Endothelial cell of umbilical vein (primary cell): ENCODE measurements at regions of chr2 and their contacts with region 1.

Region 1: GRCh38 chr2:64750817-64751285 is 97.1 kb upstream of the SERTAD2 start:
- DNase-seq: peak; percentile 100
- H3K4me3 ChIP-seq: peak overlapping the region; percentile 74 to 96 (median 87)
- H3K27ac ChIP-seq: peak overlapping the region; percentile 83
- H3K4me1 ChIP-seq: peaks cover 17% of the 10 kb centered on the region
- H3K27me3 ChIP-seq: no peaks in the 10 kb centered on the region
- CTCF ChIP-seq: no peak
- POLR2A ChIP-seq: peak; percentile 95

Region 2: DNA sequence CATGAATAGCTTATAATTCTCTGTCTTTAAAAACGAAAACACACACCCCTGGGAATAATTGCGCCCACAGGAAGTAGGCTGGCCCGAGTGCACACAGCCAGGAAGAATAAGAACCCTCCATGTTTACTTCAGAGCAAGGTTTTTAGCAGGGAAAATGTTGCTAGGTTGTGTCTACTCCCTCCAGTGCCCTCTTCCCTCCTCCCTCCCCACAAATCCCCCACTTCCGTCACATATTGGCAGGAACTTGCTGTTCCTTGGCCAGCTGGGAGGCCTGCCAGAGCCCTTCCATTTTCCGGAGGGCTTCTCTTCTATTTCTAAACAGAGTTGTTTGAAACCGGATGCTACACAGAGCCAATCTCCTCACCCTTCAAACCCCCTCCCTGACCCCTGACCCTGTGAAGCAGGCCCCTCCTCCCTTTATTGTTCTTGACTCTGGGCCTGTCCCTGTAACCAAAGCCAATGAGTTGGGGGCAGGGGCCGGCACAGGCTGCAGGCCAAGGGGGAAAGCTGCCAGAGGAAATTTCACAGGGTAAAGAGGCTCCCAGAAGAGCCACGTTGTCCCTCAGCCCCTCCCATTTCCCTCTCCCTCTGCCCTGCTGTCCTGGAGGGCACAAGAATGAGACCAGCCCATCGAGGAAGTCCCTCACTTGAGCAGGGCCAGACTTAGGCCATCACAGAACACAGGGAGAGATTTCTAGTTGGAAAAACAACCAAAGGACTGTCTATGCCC is 346.7 kb before region 1 on chr2:
- CTCF ChIA-PET with region 1: no interaction called
- POLR2A ChIA-PET with region 1: no interaction called
- dilution Hi-C with region 1: no loop called
- intact Hi-C with region 1: loop called (anchors 1 kb)
- DNase-seq: peak; percentile 99
- H3K4me3 ChIP-seq: peak overlapping the region in 1 of 3 experiments; percentile 26
- H3K27ac ChIP-seq: peak overlapping the region; percentile 72
- H3K4me1 ChIP-seq: peaks cover 35% of the 10 kb centered on the region
- H3K27me3 ChIP-seq: peaks cover 7 to 17% of the 10 kb centered on the region in 2 experiments
- CTCF ChIP-seq: no peak
- POLR2A ChIP-seq: no peak

Region 3: DNA sequence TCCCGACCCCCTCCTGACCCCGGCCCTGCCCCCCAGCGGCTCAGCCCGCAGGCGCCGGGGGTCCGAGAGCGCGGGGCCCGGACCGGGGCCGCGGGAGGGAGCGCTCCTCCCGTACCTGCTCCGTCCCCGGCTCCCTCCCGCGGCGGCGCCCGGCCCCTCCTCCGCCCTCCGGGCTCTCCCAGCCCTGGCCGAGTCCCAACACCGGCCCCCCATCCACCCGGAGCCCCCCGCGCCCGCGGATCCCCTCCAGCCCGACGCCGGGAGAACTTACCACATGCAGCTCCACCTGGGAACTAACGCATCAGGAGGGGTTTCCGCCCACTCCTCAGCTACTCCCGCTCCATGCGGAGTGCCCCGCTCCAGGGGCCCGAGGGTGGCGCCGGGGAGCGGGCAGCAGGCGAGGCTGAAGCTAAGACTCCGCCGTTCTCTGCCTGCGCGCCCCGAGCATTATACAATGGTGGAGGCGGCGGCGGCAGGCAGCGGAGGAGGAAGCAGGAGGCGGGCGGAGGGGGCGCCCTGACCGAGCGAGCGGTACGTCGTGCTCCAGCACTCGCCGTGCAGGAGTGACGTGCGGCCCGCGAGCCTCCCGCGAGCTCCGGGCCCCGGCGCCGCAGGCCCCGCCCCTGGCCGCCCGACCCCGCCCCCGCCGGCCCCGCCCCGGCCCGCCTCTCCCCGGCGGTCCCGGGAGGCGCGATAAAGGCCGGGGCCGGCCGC is 97.3 kb before region 1 on chr2 and contains the start of gene SERTAD2:
- CTCF ChIA-PET with region 1: interaction called, 86 read pairs
- POLR2A ChIA-PET with region 1: interaction called, 62 read pairs
- dilution Hi-C with region 1: no loop called
- intact Hi-C with region 1: loop called (anchors 1 kb)
- DNase-seq: peak; percentile 87
- H3K4me3 ChIP-seq: peak within 1 kb of the TSS; percentile 72 to 89 (median 83)
- H3K27ac ChIP-seq: peak within 1 kb of the TSS; percentile 91
- H3K4me1 ChIP-seq: peaks cover 21% of the 10 kb centered on the region
- H3K27me3 ChIP-seq: no peaks in the 10 kb centered on the region
- CTCF ChIP-seq: peak in 1 of 2 donors; percentile 14
- POLR2A ChIP-seq: peak; percentile 63
- total RNA-seq, gene SERTAD2: 11.2 and 12.0 TPM in 2 replicates

Region 4: GRCh38 chr2:64767670-64768468 is 17.0 kb after region 1 on chr2:
- CTCF ChIA-PET with region 1: interaction called, 26 read pairs
- POLR2A ChIA-PET with region 1: interaction called, 19 read pairs
- dilution Hi-C with region 1: no loop called
- intact Hi-C with region 1: loop called (anchors 1 kb)
- DNase-seq: peak; percentile 87
- H3K4me3 ChIP-seq: peak overlapping the region; percentile 57 to 80 (median 75)
- H3K27ac ChIP-seq: peak overlapping the region; percentile 87
- H3K4me1 ChIP-seq: peaks cover 12% of the 10 kb centered on the region
- H3K27me3 ChIP-seq: no peaks in the 10 kb centered on the region
- CTCF ChIP-seq: no peak
- POLR2A ChIP-seq: peak; percentile 76

Region 5: GRCh38 chr2:64831134-64831976 is 80.5 kb after region 1 on chr2:
- CTCF ChIA-PET with region 1: interaction called, 59 read pairs
- POLR2A ChIA-PET with region 1: interaction called, 10 read pairs
- dilution Hi-C with region 1: no loop called
- intact Hi-C with region 1: loop called (anchors 1 kb)
- DNase-seq: peak; percentile 91
- H3K4me3 ChIP-seq: no peak overlapping the region
- H3K27ac ChIP-seq: peak overlapping the region; percentile 86
- H3K4me1 ChIP-seq: peaks cover 20% of the 10 kb centered on the region
- H3K27me3 ChIP-seq: no peaks in the 10 kb centered on the region
- CTCF ChIP-seq: peak; percentile 88 to 93
- POLR2A ChIP-seq: peak; percentile 19

Region 6: DNA sequence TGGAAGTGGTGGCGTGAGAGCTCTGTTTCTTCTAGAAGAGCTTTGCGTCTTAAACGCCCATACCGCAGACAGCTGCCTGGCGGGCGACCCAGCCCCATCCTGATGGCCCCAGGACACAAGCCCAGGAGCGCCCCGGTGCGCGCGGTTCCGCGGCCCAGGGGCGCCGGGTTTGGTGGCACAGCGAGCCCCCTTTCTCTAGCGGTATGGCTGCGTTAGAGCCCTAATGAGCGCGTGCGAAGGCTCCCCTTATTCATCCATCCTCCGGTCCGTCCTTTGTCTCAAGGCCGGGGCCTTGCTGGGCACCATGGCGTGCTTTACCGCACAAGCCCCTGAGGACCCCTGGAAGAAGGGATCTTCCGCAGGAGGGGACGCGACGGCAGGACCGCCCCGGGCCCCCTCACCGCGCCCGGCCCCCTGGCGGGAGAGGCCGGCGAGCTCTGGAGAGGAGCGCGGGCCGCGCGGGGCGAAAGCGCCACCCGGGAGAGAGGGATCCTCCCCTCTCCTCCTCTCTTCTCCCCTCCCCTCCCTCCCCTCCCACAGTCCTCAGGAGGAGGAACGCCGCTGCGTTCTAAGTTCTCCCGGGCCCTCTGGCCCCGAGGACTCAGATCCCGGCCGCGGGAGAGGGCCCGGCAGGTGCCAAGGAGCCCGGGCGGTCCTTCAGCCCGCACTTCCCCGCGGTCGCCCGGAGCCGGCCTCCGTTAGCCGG is 237.7 kb after region 1 on chr2:
- CTCF ChIA-PET with region 1: interaction called, 3 read pairs
- POLR2A ChIA-PET with region 1: no interaction called
- dilution Hi-C with region 1: no loop called
- intact Hi-C with region 1: loop called (anchors 1 kb)
- DNase-seq: peak; percentile 79
- H3K4me3 ChIP-seq: peak overlapping the region; percentile 54 to 69 (median 67)
- H3K27ac ChIP-seq: peak overlapping the region; percentile 94
- H3K4me1 ChIP-seq: peaks cover 15% of the 10 kb centered on the region
- H3K27me3 ChIP-seq: peaks cover 0 to 4% of the 10 kb centered on the region in 2 experiments
- CTCF ChIP-seq: peak in 1 of 2 donors; percentile 51
- POLR2A ChIP-seq: peak; percentile 73